Activated CD4-positive, alpha-beta T cell treated with anti-CD3 and anti-CD28 coated beads for 36 hours (primary cell): ENCODE measurements at regions of chr1 and their contacts with region 1.

Region 1: GRCh38 chr1:111507411-111508201 is 4.2 kb upstream of the ADORA3 start:
- DNase-seq: peak; percentile 77
- ATAC-seq: peak; percentile 67
- H3K4me3 Mint-ChIP-seq: peak overlapping the region; percentile 50
- H3K27ac Mint-ChIP-seq: peak overlapping the region; percentile 93
- H3K4me1 Mint-ChIP-seq: peaks cover 59% of the 10 kb centered on the region
- H3K27me3 Mint-ChIP-seq: no peaks in the 10 kb centered on the region

Region 2: GRCh38 chr1:111489604-111490003 is 18.0 kb before region 1 on chr1:
- CTCF ChIA-PET with region 1: interaction called, 72 read pairs
- POLR2A ChIA-PET with region 1: interaction called, 5 read pairs
- intact Hi-C with region 1: no loop called
- DNase-seq: no peak
- ATAC-seq: no peak
- H3K4me3 Mint-ChIP-seq: no peak overlapping the region
- H3K27ac Mint-ChIP-seq: no peak overlapping the region
- H3K4me1 Mint-ChIP-seq: no peaks in the 10 kb centered on the region
- H3K27me3 Mint-ChIP-seq: no peaks in the 10 kb centered on the region

Region 3: GRCh38 chr1:111603979-111604378 is 96.4 kb after region 1 on chr1:
- CTCF ChIA-PET with region 1: interaction called, 35 read pairs
- POLR2A ChIA-PET with region 1: interaction called, 5 read pairs
- intact Hi-C with region 1: loop called in 1 of 2 experiments (anchors 2 kb)
- DNase-seq: peak; percentile 89
- ATAC-seq: peak; percentile 81
- H3K4me3 Mint-ChIP-seq: peak overlapping the region; percentile 40
- H3K27ac Mint-ChIP-seq: peak overlapping the region; percentile 96
- H3K4me1 Mint-ChIP-seq: peaks cover 77% of the 10 kb centered on the region
- H3K27me3 Mint-ChIP-seq: no peaks in the 10 kb centered on the region

Region 4: GRCh38 chr1:111656086-111657017 is 148.7 kb after region 1 on chr1:
- CTCF ChIA-PET with region 1: interaction called, 9 read pairs
- POLR2A ChIA-PET with region 1: no interaction called
- intact Hi-C with region 1: loop called (anchors 1 to 2 kb)
- DNase-seq: peak; percentile 28
- ATAC-seq: no peak
- H3K4me3 Mint-ChIP-seq: no peak overlapping the region
- H3K27ac Mint-ChIP-seq: peak overlapping the region; percentile 52
- H3K4me1 Mint-ChIP-seq: peaks cover 49% of the 10 kb centered on the region
- H3K27me3 Mint-ChIP-seq: no peaks in the 10 kb centered on the region

Region 5: DNA sequence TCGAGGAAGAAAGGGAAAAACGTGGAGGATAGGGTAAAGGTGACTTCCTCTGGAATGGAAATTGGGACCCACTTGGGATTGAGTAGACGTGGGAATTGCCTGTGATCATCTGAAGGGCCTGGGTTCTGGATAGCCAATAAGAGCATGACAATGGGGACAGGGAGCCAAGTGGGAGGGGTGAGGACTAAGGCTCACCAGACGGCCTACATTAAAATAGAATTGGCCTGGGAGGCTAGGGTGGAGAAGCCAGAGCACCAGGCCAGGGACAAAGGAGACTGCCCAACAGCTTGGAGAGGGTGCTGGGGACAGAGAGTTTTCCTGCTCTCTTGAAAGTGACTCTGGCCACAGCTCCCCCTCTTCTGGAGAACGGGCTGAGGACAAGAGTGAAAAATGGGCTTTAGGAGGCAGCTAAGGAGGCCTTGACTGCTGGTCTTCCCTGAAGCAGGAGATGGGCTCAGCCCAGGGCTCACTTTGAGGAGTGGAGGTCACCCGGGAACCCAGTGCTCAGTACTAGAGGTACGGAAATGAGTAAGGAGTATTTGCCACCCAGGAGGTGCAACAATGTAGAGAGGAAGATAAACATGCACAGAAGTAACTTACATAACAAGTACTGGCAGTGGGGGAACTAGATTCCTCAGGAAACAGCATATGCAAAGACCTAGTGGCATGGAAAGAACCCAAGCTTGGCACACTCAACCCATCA is 212.8 kb after region 1 on chr1:
- CTCF ChIA-PET with region 1: interaction called, 41 read pairs
- POLR2A ChIA-PET with region 1: no interaction called
- intact Hi-C with region 1: loop called (anchors 1 kb)
- DNase-seq: no peak
- ATAC-seq: no peak
- H3K4me3 Mint-ChIP-seq: no peak overlapping the region
- H3K27ac Mint-ChIP-seq: no peak overlapping the region
- H3K4me1 Mint-ChIP-seq: peaks cover 16% of the 10 kb centered on the region
- H3K27me3 Mint-ChIP-seq: no peaks in the 10 kb centered on the region

Region 6: DNA sequence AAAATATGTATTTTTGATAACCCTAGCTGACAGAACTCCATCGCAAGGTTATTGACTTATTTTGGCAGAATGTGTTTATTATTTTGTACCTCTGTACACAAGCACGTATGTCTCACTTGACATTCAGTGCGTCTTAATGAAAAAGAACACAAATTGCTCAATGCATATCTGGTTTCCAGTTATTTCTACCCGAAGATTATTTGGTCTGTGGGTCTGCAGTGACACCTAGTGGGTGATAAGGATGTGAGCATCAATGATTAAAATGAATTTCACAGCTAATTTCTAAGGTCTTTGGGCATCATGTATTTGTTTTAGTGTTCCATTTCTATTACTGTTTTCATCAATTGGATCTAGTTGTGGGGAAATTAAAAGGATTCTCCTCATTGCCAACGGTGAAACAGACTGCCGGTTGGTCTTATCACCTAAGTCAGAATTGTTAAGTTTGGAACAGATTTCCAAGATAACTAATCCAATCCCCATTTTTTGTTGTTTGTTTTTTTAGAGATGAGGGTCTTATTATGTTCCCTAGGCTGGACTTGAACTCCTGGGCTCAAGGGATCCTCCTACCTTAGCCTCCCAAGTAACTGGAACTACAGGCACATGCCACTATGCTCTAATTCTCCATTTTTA is 262.0 kb after region 1 on chr1:
- CTCF ChIA-PET with region 1: interaction called, 35 read pairs
- POLR2A ChIA-PET with region 1: no interaction called
- intact Hi-C with region 1: no loop called
- DNase-seq: peak; percentile 66
- ATAC-seq: no peak
- H3K4me3 Mint-ChIP-seq: no peak overlapping the region
- H3K27ac Mint-ChIP-seq: no peak overlapping the region
- H3K4me1 Mint-ChIP-seq: peaks cover 12% of the 10 kb centered on the region
- H3K27me3 Mint-ChIP-seq: no peaks in the 10 kb centered on the region